A673 (cell line): ENCODE measurements at regions of chr4 and their contacts with region 1.

Region 1: GRCh38 chr4:66688674-66689073 is 856.6 kb downstream of the CENPC start:
- DNase-seq: peak; percentile 33
- H3K4me3 ChIP-seq: no peak overlapping the region
- H3K27ac ChIP-seq: no peak overlapping the region
- H3K4me1 ChIP-seq: no peaks in the 10 kb centered on the region
- H3K27me3 ChIP-seq: no peaks in the 10 kb centered on the region
- CTCF ChIP-seq: peak; percentile 50

Region 2: DNA sequence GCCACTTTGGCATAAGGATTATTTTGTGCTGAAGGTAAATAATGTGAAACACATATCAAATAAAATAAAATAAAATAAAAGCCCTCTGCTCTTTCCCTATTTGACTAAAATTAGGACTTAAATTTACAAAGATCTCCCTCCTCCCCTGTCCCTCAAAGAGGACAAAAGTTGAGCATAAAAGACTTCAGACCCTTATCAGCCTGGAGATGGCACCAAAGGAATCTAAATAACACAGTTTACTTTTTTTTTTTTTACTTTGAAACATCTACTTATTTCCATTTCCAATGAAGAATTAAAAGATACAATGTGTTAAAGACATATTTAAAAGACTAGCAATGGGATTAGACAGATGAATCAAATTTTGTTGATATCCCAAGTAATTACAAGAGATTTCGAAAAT is 1108.1 kb before region 1 on chr4:
- CTCF ChIA-PET with region 1: no interaction called
- POLR2A ChIA-PET with region 1: no interaction called
- intact Hi-C with region 1: loop called (anchors 5 kb)
- DNase-seq: peak; percentile 40
- H3K4me3 ChIP-seq: no peak overlapping the region
- H3K27ac ChIP-seq: no peak overlapping the region
- H3K4me1 ChIP-seq: peaks cover 16% of the 10 kb centered on the region
- H3K27me3 ChIP-seq: no peaks in the 10 kb centered on the region
- CTCF ChIP-seq: no peak; the same call in 1 of the 2 replicates

Region 3: DNA sequence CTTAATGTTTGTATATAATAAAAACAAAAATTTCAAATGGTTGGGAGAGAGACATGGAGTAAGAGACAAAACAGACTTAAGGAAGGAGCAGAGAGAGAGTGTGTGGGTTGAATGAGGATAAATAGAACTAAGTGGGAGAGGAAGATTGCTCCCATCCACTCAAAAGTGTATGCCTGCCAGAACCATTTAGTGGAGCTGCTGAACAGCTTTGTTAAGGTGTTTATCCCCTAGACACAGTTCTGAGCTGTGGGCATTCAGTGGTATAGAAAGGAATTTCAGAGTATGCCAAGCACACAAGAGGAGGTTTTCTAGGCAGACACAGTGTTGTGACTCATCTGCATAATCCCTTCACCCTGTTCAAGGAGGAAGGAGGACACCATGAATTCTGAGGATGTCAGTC is 509.8 kb before region 1 on chr4:
- CTCF ChIA-PET with region 1: no interaction called
- POLR2A ChIA-PET with region 1: no interaction called
- intact Hi-C with region 1: loop called (anchors 10 kb)
- DNase-seq: peak; percentile 70
- H3K4me3 ChIP-seq: no peak overlapping the region
- H3K27ac ChIP-seq: no peak overlapping the region
- H3K4me1 ChIP-seq: peaks cover 6% of the 10 kb centered on the region
- H3K27me3 ChIP-seq: no peaks in the 10 kb centered on the region
- CTCF ChIP-seq: no peak